Motor neuron (in vitro differentiated cells): ENCODE measurements at regions of chr3 and their contacts with region 1.

Region 1: DNA sequence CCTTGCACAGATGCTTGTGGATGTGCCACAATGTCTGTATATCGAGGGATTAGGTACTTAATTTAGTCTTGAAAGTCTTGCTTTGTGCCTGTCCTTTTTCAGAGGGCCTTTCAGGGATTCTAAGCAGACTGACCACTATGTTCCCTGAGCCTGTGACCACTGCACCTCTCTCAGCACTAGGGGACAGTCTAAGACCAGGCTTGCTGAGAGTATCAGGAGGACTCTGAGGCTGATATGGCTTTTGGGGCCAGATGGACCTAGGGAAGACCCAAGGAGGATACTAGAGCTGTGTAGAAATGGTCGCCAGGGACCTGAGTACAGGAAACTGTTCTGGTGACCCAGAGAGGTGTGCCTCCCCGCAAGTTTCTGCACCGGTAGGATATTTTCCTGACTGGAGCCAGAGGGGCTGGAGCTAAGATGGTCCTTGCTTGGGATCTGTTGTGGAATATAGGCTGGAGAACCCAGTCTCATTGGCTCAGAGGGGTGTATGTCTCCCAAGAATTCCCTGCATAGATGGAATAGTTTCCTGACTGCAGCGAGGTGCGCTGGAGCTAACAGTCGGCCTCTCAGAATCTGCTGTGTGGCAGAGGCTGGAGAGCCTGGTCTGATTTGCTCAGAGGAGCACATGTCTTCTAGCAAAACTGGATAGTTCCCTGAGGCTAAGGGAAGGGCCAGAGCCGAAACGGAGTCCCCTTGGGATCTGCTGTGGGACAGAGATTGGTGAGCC is 213.2 kb upstream of the DCBLD2 start:
- ATAC-seq: peak in 3 of 8 experiments; percentile 96 to 99 (median 99)
- H3K4me3 ChIP-seq: no peak overlapping the region
- H3K27ac ChIP-seq: no peak overlapping the region
- H3K4me1 ChIP-seq: no peaks in the 10 kb centered on the region

Region 2: DNA sequence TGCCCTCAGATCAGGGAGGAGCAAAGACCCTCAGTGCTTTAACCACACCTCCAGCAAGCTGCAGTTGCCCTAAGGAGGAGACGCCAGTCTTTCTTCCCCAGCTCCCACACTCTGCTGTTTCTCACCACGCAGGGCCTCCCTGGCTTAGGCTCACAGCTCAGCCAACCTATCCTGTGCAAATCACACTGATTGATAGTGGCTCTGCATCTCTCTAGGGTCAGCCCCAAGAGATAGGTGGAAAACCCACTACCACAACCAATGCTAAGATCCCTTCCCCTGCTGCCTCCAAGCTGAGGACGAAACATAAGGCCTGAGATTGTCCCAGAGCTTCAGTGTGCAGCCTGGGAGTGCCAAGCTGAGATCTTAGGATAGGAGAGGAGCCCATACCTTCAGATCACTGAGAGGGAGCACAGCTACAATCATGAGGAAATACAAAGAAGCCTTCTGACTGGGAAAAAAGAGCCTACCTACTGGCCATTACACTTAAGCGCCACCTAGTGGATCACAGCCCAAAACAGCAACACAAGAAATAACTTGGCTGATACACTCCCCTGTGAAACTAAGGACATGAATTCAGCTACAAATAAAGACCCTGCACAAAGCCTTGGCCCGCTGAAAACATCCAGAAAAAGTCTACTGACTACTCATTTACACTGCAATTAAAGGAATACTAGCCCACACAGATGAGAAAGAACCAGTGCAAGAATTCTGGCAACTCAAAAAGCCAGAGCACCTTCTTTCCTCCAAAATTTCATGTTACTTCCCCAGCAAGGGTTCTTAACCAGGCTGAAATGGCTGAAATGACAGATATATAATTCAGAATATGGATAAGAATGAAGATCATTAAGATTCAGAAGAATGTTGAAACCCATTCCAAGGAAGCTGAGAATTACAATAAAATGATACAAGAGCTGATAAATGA is 58.3 kb after region 1 on chr3:
- in situ Hi-C with region 1: loop called in 1 of 9 experiments (anchors 10 kb)
- ATAC-seq: peak in 5 of 8 experiments; percentile 27 to 89 (median 83)
- H3K4me3 ChIP-seq: no peak overlapping the region
- H3K27ac ChIP-seq: no peak overlapping the region
- H3K4me1 ChIP-seq: peaks cover 0 to 8% of the 10 kb centered on the region in 2 donors

Region 3: DNA sequence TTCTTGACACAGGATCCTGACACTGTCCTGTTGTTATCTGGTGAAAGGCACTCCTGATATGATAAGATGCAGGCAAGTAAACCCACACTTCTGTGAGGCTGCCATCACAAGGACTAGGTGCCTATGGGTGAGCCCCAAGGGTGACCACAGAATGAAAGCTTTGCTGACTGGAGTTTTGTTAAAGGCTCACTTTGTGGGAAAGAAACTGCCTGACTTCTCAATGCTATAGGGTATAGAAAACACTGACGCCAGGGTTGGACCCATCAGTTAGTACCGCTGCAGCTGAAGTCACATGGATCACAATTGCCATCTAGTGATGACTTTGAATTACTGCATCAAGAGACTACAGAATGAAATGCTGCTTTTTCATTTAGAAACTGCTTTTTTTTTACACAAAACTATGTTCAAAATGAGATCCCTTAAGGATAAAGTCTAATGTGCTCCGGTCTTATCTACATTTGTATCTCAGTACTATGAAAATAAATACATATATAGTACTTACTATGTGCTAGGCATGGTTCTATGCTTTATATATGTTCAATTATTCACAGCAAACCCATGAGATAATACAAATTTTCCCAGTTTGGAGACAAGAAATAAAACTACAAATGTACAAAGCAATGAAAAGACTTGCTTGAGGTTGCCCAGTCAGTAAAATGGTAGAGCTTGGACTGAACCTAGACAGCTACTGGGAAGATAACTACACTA is 638.7 kb after region 1 on chr3:
- in situ Hi-C with region 1: loop called in 1 of 9 experiments (anchors 25 kb)
- ATAC-seq: peak; percentile 76 to 92 (median 80)
- H3K4me3 ChIP-seq: no peak overlapping the region
- H3K27ac ChIP-seq: no peak overlapping the region
- H3K4me1 ChIP-seq: no peaks in the 10 kb centered on the region